ENCODE measurements at regions of chr6 and their contacts with region 1.

Region 1: GRCh38 chr6:4637691-4638433 is 138.3 kb upstream of the CDYL start:
- DNase-seq: no peak
- H3K4me3 ChIP-seq: no peak overlapping the region
- H3K27ac ChIP-seq: no peak overlapping the region
- H3K4me1 ChIP-seq: 0 out of 2 replicates have a peak, but pooled peaks cover 6% of the 10 kb centered on the region
- H3K27me3 ChIP-seq: no peaks in the 10 kb centered on the region
- CTCF ChIP-seq: no peak

Region 2: GRCh38 chr6:4815584-4815983 is 177.7 kb after region 1 on chr6:
- CTCF ChIA-PET with region 1: interaction called, 10 read pairs
- POLR2A ChIA-PET with region 1: no interaction called
- intact Hi-C with region 1: no loop called
- DNase-seq: no peak
- H3K4me3 ChIP-seq: no peak overlapping the region
- H3K27ac ChIP-seq: no peak overlapping the region
- H3K4me1 ChIP-seq: no peaks in the 10 kb centered on the region
- H3K27me3 ChIP-seq: no peaks in the 10 kb centered on the region
- CTCF ChIP-seq: no peak